Gastrocnemius medialis (tissue), 4 donors: ENCODE measurements at regions of chr15 and their contacts with region 1.

Region 1: DNA sequence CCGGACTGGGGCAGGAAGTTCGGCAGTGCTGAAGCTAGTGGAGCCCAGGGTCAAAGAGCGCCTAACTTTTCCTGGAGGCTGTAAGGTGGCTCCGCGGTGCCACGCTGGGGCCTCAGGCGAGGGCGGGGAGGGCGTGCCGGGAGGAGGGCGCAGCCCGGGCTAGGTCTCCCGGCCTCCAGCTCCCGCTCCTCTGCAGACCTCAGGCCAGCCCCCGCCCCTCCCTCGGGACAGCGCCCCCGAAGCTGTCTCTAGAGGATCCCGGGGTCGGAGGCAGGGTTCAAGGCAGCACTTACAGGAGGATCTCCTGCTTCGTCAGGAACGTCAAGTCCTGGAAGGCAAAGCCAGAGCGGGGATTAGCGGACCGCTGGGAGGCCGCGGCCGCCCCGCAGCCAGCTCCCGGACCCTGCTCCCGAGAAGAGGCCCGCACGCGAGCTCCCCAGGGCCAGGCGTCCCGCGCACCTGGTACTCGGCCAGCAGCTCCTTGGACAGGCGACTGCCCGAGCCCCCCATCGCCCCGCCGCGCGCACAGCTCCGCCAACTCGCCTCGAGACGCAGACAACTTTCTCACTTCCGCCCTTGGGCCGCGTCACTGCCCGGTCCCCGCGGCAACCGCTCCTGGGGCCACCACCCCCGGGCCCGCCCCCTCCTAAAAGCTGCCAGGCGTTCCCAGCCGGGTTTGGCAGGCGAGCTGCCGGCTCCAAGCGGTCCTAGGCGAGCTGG is at the start of gene CIB1:
- DNase-seq: peak; percentile 96 to 97
- ATAC-seq: peak; percentile 82 to 89
- H3K4me3 ChIP-seq: peak within 1 kb of the TSS; percentile 84 to 99 (median 94)
- H3K27ac ChIP-seq: peak within 1 kb of the TSS; percentile 86 to 96 (median 94)
- H3K4me1 ChIP-seq: peaks cover 32 to 44% of the 10 kb centered on the region in 2 donors
- H3K27me3 ChIP-seq: no peaks in the 10 kb centered on the region
- CTCF ChIP-seq: peak in 4 of 5 experiments; percentile 46 to 60 (median 51)
- POLR2A ChIP-seq: peak; percentile 77 to 80
- total RNA-seq, gene CIB1: 15.5 to 43.4 (median 30.7) TPM

Region 2: GRCh38 chr15:90174140-90174875 is 59.2 kb before region 1 on chr15:
- in situ Hi-C with region 1: no loop called
- intact Hi-C with region 1: loop called (anchors 2 kb)
- DNase-seq: peak; percentile 55 to 67
- ATAC-seq: peak; percentile 60 to 86
- H3K4me3 ChIP-seq: peak overlapping the region in 3 of 4 donors; percentile 22 to 40 (median 38)
- H3K27ac ChIP-seq: peak overlapping the region; percentile 58 to 80 (median 68)
- H3K4me1 ChIP-seq: peaks cover 5 to 14% of the 10 kb centered on the region in 2 donors
- H3K27me3 ChIP-seq: no peaks in the 10 kb centered on the region
- CTCF ChIP-seq: no peak
- POLR2A ChIP-seq: no peak

Region 3: DNA sequence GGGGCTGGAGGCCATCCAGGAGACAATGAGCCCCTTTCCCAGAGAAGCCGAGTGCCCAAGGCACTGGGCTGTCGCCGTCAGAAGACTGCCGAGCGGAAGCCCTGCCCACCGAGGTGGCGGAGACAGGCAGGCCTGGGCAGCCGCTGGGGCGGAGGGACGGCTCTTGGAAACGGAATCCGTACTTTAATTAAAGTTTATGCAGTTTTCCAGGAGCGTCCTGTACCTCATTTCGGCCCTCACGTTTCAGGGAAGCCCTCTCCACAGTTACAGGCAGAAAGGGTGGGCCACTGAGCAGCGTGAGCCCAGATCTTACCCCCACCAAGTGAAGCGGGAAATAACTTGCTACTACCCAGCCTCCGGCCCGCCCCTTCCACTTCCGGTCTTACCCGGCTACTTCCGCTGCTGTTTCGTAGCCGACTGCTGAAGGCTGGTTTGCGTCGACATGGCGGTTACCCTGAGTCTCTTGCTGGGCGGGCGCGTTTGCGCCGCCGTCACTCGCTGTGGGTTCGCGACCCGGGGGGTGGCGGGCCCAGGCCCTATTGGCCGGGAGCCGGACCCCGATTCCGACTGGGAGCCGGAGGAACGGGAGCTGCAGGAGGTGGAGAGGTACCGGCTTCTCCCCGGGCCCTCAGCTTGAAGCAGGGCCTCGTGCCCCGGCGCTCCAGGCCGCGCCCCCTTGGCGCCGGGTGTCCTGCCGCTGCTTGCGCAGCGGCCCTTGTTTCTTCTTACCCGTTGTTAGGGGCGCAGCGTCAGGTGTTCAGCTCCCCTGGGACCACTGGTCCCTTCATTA is 31.9 kb after region 1 on chr15 and contains the start of gene NGRN:
- in situ Hi-C with region 1: no loop called
- intact Hi-C with region 1: loop called (anchors 1 kb)
- DNase-seq: peak; percentile 89 to 90
- ATAC-seq: peak; percentile 92 to 94
- H3K4me3 ChIP-seq: peak within 1 kb of the TSS; percentile 68 to 94 (median 82)
- H3K27ac ChIP-seq: peak within 1 kb of the TSS; percentile 95 to 100 (median 96)
- H3K4me1 ChIP-seq: peaks cover 46 to 54% of the 10 kb centered on the region in 2 donors
- H3K27me3 ChIP-seq: no peaks in the 10 kb centered on the region
- CTCF ChIP-seq: no peak
- POLR2A ChIP-seq: peak; percentile 93 to 94
- total RNA-seq, gene NGRN: 160 to 323 (median 274) TPM

Region 4: GRCh38 chr15:90436952-90437351 is 203.4 kb after region 1 on chr15:
- in situ Hi-C with region 1: no loop called
- intact Hi-C with region 1: no loop called
- DNase-seq: no peak
- ATAC-seq: no peak
- H3K4me3 ChIP-seq: no peak overlapping the region
- H3K27ac ChIP-seq: peak overlapping the region in 1 of 4 donors; percentile 27
- H3K4me1 ChIP-seq: peaks cover 3 to 11% of the 10 kb centered on the region in 2 donors
- H3K27me3 ChIP-seq: no peaks in the 10 kb centered on the region
- CTCF ChIP-seq: no peak
- POLR2A ChIP-seq: no peak

Region 5: GRCh38 chr15:90620379-90621067 is 387.0 kb after region 1 on chr15:
- in situ Hi-C with region 1: no loop called
- intact Hi-C with region 1: no loop called
- DNase-seq: no peak
- ATAC-seq: no peak
- H3K4me3 ChIP-seq: no peak overlapping the region
- H3K27ac ChIP-seq: peak overlapping the region in 3 of 4 donors; percentile 30 to 91 (median 91)
- H3K4me1 ChIP-seq: peaks cover 33 to 55% of the 10 kb centered on the region in 2 donors
- H3K27me3 ChIP-seq: no peaks in the 10 kb centered on the region
- CTCF ChIP-seq: no peak
- POLR2A ChIP-seq: no peak